ENCODE measurements at regions of chr1 and their contacts with region 1.

Region 1: DNA sequence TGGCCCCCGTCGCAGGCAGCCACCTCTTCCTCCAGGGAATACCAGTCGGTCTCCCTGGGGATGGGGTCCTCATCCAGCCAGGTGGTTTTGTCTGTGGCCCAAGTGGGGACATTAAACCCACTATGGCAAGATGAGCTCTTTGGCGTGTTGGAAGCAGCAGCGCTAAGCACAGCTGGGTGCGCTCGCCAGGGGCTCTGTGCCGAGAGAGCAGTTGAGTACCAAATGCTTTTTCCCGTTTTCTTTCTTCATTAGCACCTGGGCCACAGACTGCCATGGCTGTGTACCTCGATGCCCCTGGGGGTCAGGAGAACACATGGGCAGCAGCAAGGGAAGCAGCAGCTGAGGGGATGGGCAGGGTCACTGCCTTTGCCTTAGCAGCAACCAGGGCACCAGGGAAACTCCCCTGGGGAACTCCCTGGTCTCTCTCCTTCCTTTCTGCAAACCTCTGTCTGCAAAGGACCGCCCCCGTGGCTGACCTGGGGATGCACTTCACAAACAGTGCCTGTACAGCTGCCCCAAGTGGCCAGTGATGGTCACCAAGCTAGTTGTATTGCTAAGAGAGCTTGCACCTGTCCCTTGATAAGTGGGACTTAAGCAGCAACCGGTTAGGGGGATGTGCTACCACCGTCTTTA is 31.1 kb downstream of the EDARADD start:
- DNase-seq: peak in 2 of 4 experiments; percentile 28 to 38
- ATAC-seq: peak; percentile 70
- H3K4me3 ChIP-seq: no peak overlapping the region
- H3K27ac ChIP-seq: no peak overlapping the region
- H3K4me1 ChIP-seq: peaks cover 8 to 11% of the 10 kb centered on the region in 2 experiments; a peak in 3 of 5 replicates
- H3K27me3 ChIP-seq: no peaks in the 10 kb centered on the region
- CTCF ChIP-seq: peak; percentile 20 to 33 (median 23); a peak in 2 of 6 replicates
- EP300 ChIP-seq: no peak
- POLR2A ChIP-seq: no peak
- RAD21 ChIP-seq: no peak

Region 2: DNA sequence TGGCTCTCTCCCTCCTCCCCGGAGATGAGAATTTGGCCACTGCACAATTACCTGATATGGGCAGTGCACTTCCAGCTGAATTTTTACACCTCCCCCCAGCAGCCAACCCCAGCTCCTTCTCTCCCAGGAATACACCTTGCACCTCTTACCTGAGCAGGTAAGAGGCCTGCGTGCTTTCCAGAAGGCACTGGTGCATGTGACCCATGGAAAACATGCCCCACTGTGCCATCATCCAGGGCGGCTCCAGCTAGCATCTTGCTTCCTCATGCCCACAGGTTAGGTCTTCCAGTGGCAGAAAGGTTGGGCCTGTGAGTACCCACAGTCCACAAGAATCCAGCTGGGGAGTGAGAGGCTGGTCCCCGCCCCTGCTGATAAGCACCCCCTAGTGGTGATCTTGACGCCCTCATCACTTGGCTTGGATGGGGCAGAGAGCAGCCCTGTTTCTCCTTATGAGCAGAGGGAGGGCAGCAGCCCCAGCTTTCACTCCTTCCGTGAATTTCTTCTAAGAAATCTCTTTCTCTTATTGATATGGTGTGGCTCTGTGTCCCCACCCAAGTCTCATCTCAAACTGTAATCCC is 26.7 kb after region 1 on chr1:
- CTCF ChIA-PET with region 1: no interaction called
- POLR2A ChIA-PET with region 1: interaction called, 13 read pairs
- in situ Hi-C with region 1: no loop called
- intact Hi-C with region 1: no loop called
- DNase-seq: peak; percentile 72 to 81 (median 75)
- ATAC-seq: peak; percentile 98
- H3K4me3 ChIP-seq: no peak overlapping the region
- H3K27ac ChIP-seq: no peak overlapping the region
- H3K4me1 ChIP-seq: no peaks in the 10 kb centered on the region; a peak in 2 of 5 replicates
- H3K27me3 ChIP-seq: no peaks in the 10 kb centered on the region
- CTCF ChIP-seq: peak; percentile 71 to 84 (median 77)
- EP300 ChIP-seq: no peak
- POLR2A ChIP-seq: no peak
- RAD21 ChIP-seq: peak; percentile 49 to 77